Activated CD4-positive, alpha-beta memory T cell treated with anti-CD3 and anti-CD28 coated beads for 36 hours (primary cell): ENCODE measurements at regions of chr9 and their contacts with region 1.

Region 1: GRCh38 chr9:3746296-3747275 is 220.8 kb upstream of the RFX3 start:
- DNase-seq: peak; percentile 68
- H3K4me3 Mint-ChIP-seq: no peak overlapping the region
- H3K27ac Mint-ChIP-seq: peak overlapping the region; percentile 57
- H3K4me1 Mint-ChIP-seq: peaks cover 23% of the 10 kb centered on the region
- H3K27me3 Mint-ChIP-seq: peaks cover 3% of the 10 kb centered on the region

Region 2: DNA sequence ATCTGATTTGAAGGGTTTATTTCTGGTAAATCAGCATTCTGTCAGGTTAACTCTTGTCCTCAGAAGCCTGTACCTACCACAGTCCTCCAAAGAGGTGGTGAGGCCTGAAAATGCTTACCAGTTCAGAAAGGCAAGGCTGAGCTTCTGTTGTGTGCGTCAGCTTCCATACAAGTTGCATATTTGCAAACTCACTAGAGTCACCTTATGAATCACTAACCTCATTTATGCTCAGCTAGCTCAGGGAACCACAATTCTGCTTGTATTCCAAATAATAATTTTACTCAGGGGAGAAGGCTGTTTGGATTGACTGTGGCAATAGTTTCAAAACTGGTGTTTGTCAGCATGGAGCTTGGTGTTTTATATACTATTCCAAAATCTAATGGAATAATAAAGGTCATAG is 134.3 kb after region 1 on chr9:
- CTCF ChIA-PET with region 1: no interaction called
- POLR2A ChIA-PET with region 1: no interaction called
- intact Hi-C with region 1: loop called (anchors 5 kb)
- DNase-seq: peak; percentile 9
- H3K4me3 Mint-ChIP-seq: no peak overlapping the region
- H3K27ac Mint-ChIP-seq: no peak overlapping the region
- H3K4me1 Mint-ChIP-seq: no peaks in the 10 kb centered on the region
- H3K27me3 Mint-ChIP-seq: no peaks in the 10 kb centered on the region

Region 3: GRCh38 chr9:4099976-4100735 is 353.6 kb after region 1 on chr9:
- CTCF ChIA-PET with region 1: no interaction called
- POLR2A ChIA-PET with region 1: no interaction called
- intact Hi-C with region 1: loop called (anchors 1 kb)
- DNase-seq: peak; percentile 48
- H3K4me3 Mint-ChIP-seq: no peak overlapping the region
- H3K27ac Mint-ChIP-seq: no peak overlapping the region
- H3K4me1 Mint-ChIP-seq: peaks cover 14% of the 10 kb centered on the region
- H3K27me3 Mint-ChIP-seq: peaks cover 12% of the 10 kb centered on the region